Right lobe of liver (tissue), 6 donors: ENCODE measurements at regions of chr20 and their contacts with region 1.

Region 1: DNA sequence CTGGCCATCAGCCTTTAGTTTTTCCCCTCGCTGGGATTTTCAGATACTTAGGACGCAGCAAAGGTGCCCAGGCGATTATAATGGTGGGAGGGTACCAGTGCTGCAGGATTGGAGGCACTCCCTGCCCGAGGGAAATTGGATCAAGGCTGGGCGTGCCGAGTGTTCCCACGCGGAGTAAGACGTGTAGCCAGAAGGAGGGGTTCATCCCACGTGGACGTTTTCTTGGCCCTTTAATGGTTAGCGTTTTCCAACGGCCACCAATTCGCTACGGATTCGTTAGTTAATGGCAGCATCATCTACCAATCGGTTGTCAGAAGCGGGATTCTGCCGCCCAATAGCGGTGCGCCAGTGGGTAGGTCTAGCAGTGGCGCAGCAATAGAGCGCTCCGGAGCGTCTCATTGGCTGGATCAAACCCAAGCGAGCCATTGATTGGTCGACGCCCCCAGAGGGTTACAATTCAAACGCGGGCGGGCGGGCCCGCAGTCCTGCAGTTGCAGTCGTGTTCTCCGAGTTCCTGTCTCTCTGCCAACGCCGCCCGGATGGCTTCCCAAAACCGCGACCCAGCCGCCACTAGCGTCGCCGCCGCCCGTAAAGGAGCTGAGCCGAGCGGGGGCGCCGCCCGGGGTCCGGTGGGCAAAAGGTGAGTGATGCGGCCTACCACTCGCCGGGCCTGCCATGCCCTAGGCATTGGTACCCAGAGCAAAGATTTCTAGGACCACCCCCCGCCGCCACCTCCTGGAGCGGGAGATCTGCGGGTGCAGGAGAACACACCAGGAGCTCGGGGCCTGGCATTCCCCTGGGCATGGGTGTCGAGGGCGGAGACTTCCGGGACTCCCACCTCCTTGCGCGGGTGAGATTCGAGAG is at the start of gene UBE2C:
- DNase-seq: peak; percentile 93 to 96 (median 96)
- ATAC-seq: peak; percentile 98 to 99 (median 98)
- H3K4me3 ChIP-seq: peak within 1 kb of the TSS; percentile 38 to 51 (median 40)
- H3K27ac ChIP-seq: no peak within 1 kb of the TSS
- H3K4me1 ChIP-seq: peaks cover 0 to 6% (median 0%) of the 10 kb centered on the region in 4 donors
- H3K27me3 ChIP-seq: no peaks in the 10 kb centered on the region
- CTCF ChIP-seq: no peak
- POLR2A ChIP-seq: no peak
- total RNA-seq, gene UBE2C: 0.66 to 5.8 (median 3.7) TPM in 5 of 6 experiments, not detected in the other

Region 2: GRCh38 chr20:45959956-45960630 is 147.7 kb after region 1 on chr20:
- intact Hi-C with region 1: loop called in 1 of 2 experiments (anchors 10 kb)
- DNase-seq: peak in 2 of 3 donors; percentile 21 to 27
- ATAC-seq: no peak
- H3K4me3 ChIP-seq: no peak overlapping the region
- H3K27ac ChIP-seq: no peak overlapping the region
- H3K4me1 ChIP-seq: no peaks in the 10 kb centered on the region
- H3K27me3 ChIP-seq: no peaks in the 10 kb centered on the region
- CTCF ChIP-seq: no peak
- POLR2A ChIP-seq: no peak